Endothelial cell of umbilical vein (primary cell): ENCODE measurements at regions of chr11 and their contacts with region 1.

Region 1: GRCh38 chr11:29019960-29020683 is 911.9 kb downstream of the METTL15 start:
- DNase-seq: peak; percentile 80
- H3K4me3 ChIP-seq: no peak overlapping the region
- H3K27ac ChIP-seq: peak overlapping the region; percentile 97
- H3K4me1 ChIP-seq: peaks cover 31% of the 10 kb centered on the region
- H3K27me3 ChIP-seq: no peaks in the 10 kb centered on the region
- CTCF ChIP-seq: peak; percentile 50 to 70
- POLR2A ChIP-seq: peak; percentile 22

Region 2: DNA sequence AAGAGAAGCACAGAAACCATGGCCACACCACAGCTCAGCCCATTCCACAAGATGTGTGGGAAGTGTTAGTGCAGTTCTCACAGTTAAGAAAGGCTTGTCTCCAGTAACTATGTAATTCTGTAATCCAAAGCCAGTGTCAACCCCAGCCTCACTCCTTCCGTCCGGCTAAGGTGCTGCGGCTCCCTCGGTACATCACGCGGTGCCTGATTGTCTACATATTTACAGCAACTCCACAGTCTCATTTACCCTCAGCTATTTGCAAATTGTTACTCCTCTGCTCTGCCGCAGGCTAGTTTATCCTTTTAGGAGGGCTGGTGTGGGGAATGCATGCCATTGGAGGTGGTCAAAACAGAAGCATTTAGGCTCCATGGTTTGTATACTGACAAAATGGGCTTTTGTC is 553.7 kb before region 1 on chr11:
- CTCF ChIA-PET with region 1: no interaction called
- POLR2A ChIA-PET with region 1: no interaction called
- dilution Hi-C with region 1: no loop called
- intact Hi-C with region 1: no loop called
- DNase-seq: no peak
- H3K4me3 ChIP-seq: no peak overlapping the region
- H3K27ac ChIP-seq: no peak overlapping the region
- H3K4me1 ChIP-seq: peaks cover 6% of the 10 kb centered on the region
- H3K27me3 ChIP-seq: no peaks in the 10 kb centered on the region
- CTCF ChIP-seq: no peak
- POLR2A ChIP-seq: no peak

Region 3: GRCh38 chr11:28566339-28567089 is 453.6 kb before region 1 on chr11:
- CTCF ChIA-PET with region 1: no interaction called
- POLR2A ChIA-PET with region 1: no interaction called
- dilution Hi-C with region 1: no loop called
- intact Hi-C with region 1: loop called (anchors 10 kb)
- DNase-seq: peak; percentile 92
- H3K4me3 ChIP-seq: peak overlapping the region in 2 of 3 experiments; percentile 28 to 71
- H3K27ac ChIP-seq: peak overlapping the region; percentile 77
- H3K4me1 ChIP-seq: peaks cover 12% of the 10 kb centered on the region
- H3K27me3 ChIP-seq: no peaks in the 10 kb centered on the region
- CTCF ChIP-seq: no peak
- POLR2A ChIP-seq: no peak

Region 4: GRCh38 chr11:28743061-28743550 is 277.0 kb before region 1 on chr11:
- CTCF ChIA-PET with region 1: interaction called, 7 read pairs
- POLR2A ChIA-PET with region 1: no interaction called
- dilution Hi-C with region 1: no loop called
- intact Hi-C with region 1: loop called (anchors 5 kb)
- DNase-seq: peak; percentile 91
- H3K4me3 ChIP-seq: no peak overlapping the region
- H3K27ac ChIP-seq: peak overlapping the region; percentile 70
- H3K4me1 ChIP-seq: peaks cover 45% of the 10 kb centered on the region
- H3K27me3 ChIP-seq: no peaks in the 10 kb centered on the region
- CTCF ChIP-seq: no peak
- POLR2A ChIP-seq: no peak

Region 5: DNA sequence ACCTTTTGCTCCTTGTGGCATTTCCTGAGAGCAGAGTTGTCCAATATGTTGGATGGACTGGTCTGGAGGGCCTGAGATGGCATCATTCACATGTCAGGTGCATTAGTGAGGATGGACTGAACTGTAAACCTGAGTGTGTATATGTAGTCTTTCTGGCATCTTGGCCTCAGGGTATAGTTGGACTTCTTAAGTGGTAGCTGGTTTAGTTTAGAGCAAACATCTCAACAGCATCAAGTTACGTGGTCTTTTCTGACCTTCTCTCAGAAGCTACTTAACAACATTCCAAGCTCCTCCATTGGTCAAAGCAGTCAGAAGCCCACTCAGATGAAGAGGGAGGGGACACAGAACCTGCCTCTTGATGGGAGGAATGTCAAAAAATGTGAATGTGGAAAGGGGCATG is 82.0 kb before region 1 on chr11:
- CTCF ChIA-PET with region 1: no interaction called
- POLR2A ChIA-PET with region 1: no interaction called
- dilution Hi-C with region 1: no loop called
- intact Hi-C with region 1: no loop called
- DNase-seq: no peak
- H3K4me3 ChIP-seq: no peak overlapping the region
- H3K27ac ChIP-seq: no peak overlapping the region
- H3K4me1 ChIP-seq: no peaks in the 10 kb centered on the region
- H3K27me3 ChIP-seq: no peaks in the 10 kb centered on the region
- CTCF ChIP-seq: no peak
- POLR2A ChIP-seq: no peak

Region 6: GRCh38 chr11:29006668-29007067 is 13.5 kb before region 1 on chr11:
- CTCF ChIA-PET with region 1: interaction called, 7 read pairs
- POLR2A ChIA-PET with region 1: no interaction called
- dilution Hi-C with region 1: no loop called
- intact Hi-C with region 1: loop called (anchors 1 kb)
- DNase-seq: peak; percentile 54
- H3K4me3 ChIP-seq: no peak overlapping the region
- H3K27ac ChIP-seq: no peak overlapping the region
- H3K4me1 ChIP-seq: peaks cover 45% of the 10 kb centered on the region
- H3K27me3 ChIP-seq: no peaks in the 10 kb centered on the region
- CTCF ChIP-seq: no peak
- POLR2A ChIP-seq: no peak

Region 7: DNA sequence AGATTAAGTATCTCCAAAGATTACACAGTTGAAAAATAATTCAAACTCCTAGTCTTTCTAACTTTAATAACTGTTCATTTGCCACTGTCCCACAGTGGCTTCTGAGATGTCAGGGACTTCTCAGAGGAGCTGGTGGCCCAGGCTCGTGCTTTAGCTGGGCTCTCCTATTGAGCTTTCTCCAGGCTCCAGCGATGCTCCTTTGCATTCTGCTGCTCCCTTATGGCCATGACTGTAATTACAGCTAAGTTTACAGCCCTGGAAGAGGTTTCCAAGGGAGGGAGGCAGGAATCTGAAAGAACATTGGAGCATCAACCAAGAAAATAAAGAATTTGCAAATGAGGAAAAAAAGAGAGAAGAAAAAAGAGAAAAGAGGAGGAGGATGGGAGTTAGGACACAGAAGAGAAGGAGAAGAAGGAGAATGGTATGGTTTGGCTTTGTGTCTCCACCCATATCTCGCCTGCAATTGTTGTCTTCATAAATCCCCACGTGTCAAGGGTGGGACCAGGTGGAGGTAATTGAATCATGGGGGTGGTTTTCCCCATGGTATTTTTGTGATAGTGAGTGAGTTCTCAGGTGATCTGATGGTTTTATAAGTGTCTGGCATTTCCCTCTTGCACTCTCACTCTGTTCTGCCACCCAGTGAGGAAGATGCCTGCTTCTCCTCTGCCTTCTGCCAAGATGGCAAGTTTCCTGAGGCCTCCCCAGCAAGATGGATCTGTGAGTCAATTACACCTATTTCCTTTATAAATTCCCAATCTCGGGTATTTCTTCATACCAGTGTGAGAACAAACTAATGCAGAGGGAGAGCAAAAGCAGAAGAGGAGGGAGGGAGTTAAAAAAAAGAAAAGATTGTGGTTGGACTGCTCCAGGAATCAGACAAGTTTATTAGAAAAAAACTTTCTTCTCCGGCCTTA is 139.7 kb after region 1 on chr11:
- CTCF ChIA-PET with region 1: interaction called, 45 read pairs
- POLR2A ChIA-PET with region 1: no interaction called
- dilution Hi-C with region 1: no loop called
- intact Hi-C with region 1: loop called (anchors 1 kb)
- DNase-seq: peak; percentile 82
- H3K4me3 ChIP-seq: no peak overlapping the region
- H3K27ac ChIP-seq: peak overlapping the region; percentile 12
- H3K4me1 ChIP-seq: peaks cover 9% of the 10 kb centered on the region
- H3K27me3 ChIP-seq: no peaks in the 10 kb centered on the region
- CTCF ChIP-seq: peak; percentile 67 to 71
- POLR2A ChIP-seq: no peak

Region 8: GRCh38 chr11:29328961-29329441 is 308.9 kb after region 1 on chr11:
- CTCF ChIA-PET with region 1: interaction called, 14 read pairs
- POLR2A ChIA-PET with region 1: no interaction called
- dilution Hi-C with region 1: no loop called
- intact Hi-C with region 1: loop called (anchors 5 kb)
- DNase-seq: peak; percentile 75
- H3K4me3 ChIP-seq: no peak overlapping the region
- H3K27ac ChIP-seq: no peak overlapping the region
- H3K4me1 ChIP-seq: peaks cover 7% of the 10 kb centered on the region
- H3K27me3 ChIP-seq: no peaks in the 10 kb centered on the region
- CTCF ChIP-seq: peak; percentile 63 to 66
- POLR2A ChIP-seq: no peak